BJ (cell line): ENCODE measurements at regions of chr3 and their contacts with region 1.

Region 1: GRCh38 chr3:74287557-74287956 is 326.9 kb downstream of the CNTN3 start:
- DNase-seq: no peak
- H3K4me3 ChIP-seq: no peak overlapping the region
- H3K27me3 ChIP-seq: no peaks in the 10 kb centered on the region
- CTCF ChIP-seq: no peak

Region 2: GRCh38 chr3:74165211-74165610 is 122.3 kb before region 1 on chr3:
- CTCF ChIA-PET with region 1: no interaction called
- POLR2A ChIA-PET with region 1: no interaction called
- DNase-seq: no peak
- H3K4me3 ChIP-seq: no peak overlapping the region
- H3K27me3 ChIP-seq: no peaks in the 10 kb centered on the region
- CTCF ChIP-seq: no peak

Region 3: DNA sequence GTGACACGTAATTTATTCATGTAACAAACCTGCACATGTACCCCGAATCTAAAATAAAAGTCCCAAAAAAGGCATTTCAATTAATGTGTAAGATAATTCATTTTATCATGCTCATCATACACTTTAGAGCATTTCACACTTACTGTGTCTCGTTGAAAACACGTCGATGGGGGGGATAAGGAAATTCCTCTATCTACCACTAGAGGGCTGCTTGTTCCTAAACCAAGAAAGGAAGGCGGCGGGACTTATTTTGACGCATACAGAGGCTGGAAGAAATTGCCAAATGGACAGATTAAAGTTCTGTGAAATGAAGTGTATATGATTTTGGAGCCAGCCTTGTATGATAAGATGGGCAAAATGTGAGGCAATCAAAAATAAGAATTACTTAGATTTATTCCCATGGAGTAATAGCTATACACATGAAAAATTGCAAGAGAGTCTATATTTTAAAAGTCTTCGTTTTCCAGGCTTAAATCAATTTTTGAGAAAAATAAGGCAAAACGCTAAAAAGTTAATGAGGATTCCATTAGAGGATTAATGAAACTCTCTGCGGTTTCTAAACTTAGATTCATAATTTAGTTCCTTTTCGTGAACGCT is 19.9 kb before region 1 on chr3:
- CTCF ChIA-PET with region 1: interaction called, 10 read pairs
- POLR2A ChIA-PET with region 1: no interaction called
- DNase-seq: no peak
- H3K4me3 ChIP-seq: no peak overlapping the region
- H3K27me3 ChIP-seq: no peaks in the 10 kb centered on the region
- CTCF ChIP-seq: peak; percentile 87